Activated B cell treated with CpG ODN at 0.5 μM for 24 hours (primary cell): ENCODE measurements at regions of chr16 and their contacts with region 1.

Region 1: GRCh38 chr16:4475880-4476788 is at the start of gene HMOX2:
- DNase-seq: peak; percentile 98
- ATAC-seq: peak; percentile 91
- H3K4me3 Mint-ChIP-seq: peak within 1 kb of the TSS; percentile 85
- H3K27ac Mint-ChIP-seq: peak within 1 kb of the TSS; percentile 80
- H3K4me1 Mint-ChIP-seq: peaks cover 37% of the 10 kb centered on the region
- H3K27me3 Mint-ChIP-seq: no peaks in the 10 kb centered on the region
- CTCF ChIP-seq: no peak
- total RNA-seq, gene HMOX2: 30.8 and 32.1 TPM in 2 replicates

Region 2: DNA sequence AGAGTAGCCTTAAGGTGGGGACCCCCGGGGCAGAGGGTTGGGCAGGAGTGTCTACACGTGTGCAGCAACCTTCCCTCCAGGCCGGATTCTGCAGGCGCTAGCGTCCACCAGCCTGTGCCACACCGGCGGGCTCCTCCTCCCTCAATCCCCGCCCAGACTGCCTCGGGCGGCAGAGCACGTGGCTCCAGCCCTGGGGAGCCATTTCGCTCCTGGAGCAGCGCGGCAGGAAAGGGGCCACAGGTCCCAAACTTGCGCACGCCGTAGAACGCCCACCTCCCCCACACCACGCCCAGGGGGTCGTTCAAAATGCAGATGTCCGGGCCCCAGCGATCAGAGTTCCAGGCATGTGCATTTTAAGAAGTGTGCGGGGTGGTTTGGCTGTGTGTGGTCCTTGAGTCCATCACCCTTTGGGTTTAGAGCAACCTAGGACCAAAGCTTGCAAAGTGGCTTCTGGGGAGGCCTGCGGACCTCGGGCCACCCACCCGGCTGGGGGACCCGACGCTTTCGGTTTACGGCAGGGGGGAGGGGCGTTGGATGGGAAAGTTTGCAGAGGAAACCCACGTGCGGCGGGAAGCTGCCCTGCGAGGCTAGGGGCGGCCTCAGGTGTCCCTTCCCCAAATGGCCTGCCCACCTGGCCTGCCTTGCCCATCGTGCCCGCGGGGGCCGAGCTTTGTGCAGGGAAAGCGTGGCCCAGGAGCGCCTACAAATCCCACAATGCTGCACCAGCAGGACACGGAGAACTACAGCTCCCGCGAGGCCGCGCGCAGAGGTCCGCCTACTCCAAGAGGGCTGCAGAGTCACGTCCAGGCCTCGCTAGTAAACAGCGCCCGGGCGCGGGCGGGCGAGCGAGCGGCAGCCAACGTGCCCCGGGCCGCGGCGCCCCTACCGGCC is 204.7 kb before region 1 on chr16:
- CTCF ChIA-PET with region 1: no interaction called
- POLR2A ChIA-PET with region 1: interaction called, 3 read pairs
- intact Hi-C with region 1: loop called (anchors 5 kb)
- DNase-seq: peak; percentile 82
- ATAC-seq: peak; percentile 81
- H3K4me3 Mint-ChIP-seq: peak overlapping the region; percentile 86
- H3K27ac Mint-ChIP-seq: peak overlapping the region; percentile 88
- H3K4me1 Mint-ChIP-seq: peaks cover 11% of the 10 kb centered on the region
- H3K27me3 Mint-ChIP-seq: no peaks in the 10 kb centered on the region
- CTCF ChIP-seq: no peak

Region 3: DNA sequence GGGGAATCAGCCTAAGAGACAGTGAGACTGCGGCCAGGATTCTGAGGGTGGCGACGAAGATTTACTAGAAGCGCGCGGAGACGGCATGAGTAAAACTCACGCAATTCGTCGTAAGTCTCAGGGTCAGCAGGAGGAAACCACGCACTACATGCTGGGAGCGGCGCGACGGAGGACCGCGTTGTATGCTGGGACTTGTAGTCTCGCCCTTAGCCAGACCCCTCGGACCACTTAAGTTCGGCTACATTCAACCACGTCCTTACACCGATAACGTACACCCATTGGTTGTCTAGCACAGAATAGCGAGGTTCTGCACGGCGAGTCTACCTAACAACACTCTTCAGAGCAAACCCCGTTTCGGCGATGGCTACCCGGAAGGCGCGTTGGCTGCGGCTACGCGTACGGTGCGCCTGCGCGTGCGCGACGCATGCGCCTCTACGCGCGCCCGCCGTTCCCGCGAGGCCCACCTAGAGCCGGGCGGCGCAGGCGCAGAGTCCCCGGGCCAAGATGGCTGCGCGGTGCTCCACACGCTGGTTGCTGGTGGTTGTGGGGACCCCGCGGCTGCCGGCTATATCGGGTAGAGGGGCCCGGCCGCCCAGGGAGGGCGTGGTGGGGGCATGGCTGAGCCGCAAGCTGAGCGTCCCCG is 50.6 kb before region 1 on chr16 and contains the start of gene DNAJA3:
- CTCF ChIA-PET with region 1: no interaction called
- POLR2A ChIA-PET with region 1: interaction called, 5 read pairs
- intact Hi-C with region 1: loop called (anchors 1 kb)
- DNase-seq: peak; percentile 93
- ATAC-seq: peak; percentile 90
- H3K4me3 Mint-ChIP-seq: peak within 1 kb of the TSS; percentile 97
- H3K27ac Mint-ChIP-seq: peak within 1 kb of the TSS; percentile 100
- H3K4me1 Mint-ChIP-seq: peaks cover 31% of the 10 kb centered on the region
- H3K27me3 Mint-ChIP-seq: no peaks in the 10 kb centered on the region
- CTCF ChIP-seq: no peak
- total RNA-seq, gene DNAJA3: 55.3 and 62.6 TPM in 2 replicates

Region 4: DNA sequence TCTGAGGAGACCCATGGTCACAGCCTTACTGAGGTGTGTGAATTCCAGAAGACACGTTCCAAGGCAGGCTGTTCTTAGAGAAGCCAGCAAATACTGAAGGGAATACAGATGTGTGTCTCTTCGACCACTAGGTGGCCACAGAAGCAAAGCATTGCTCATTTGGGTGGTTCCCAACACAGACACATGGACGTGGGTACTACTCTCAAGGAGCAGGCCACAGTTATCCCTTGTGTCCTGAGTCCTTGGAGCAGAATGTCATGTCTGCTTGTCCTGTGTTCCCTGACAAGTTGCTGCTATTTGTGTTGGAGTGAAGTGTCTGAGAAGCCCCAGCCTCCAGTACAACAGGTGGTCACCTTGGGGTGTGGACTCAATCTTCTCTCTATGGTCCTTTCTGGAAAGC is 30.3 kb after region 1 on chr16:
- CTCF ChIA-PET with region 1: interaction called, 26 read pairs
- POLR2A ChIA-PET with region 1: interaction called, 23 read pairs
- intact Hi-C with region 1: loop called (anchors 1 kb)
- DNase-seq: peak; percentile 31
- ATAC-seq: peak; percentile 39
- H3K4me3 Mint-ChIP-seq: peak overlapping the region; percentile 29
- H3K27ac Mint-ChIP-seq: peak overlapping the region; percentile 93
- H3K4me1 Mint-ChIP-seq: peaks cover 40% of the 10 kb centered on the region
- H3K27me3 Mint-ChIP-seq: no peaks in the 10 kb centered on the region
- CTCF ChIP-seq: peak; percentile 46

Region 5: GRCh38 chr16:4544473-4544872 is 68.3 kb after region 1 on chr16:
- CTCF ChIA-PET with region 1: interaction called, 5 read pairs
- POLR2A ChIA-PET with region 1: interaction called, 13 read pairs
- intact Hi-C with region 1: loop called (anchors 1 kb)
- DNase-seq: no peak
- ATAC-seq: no peak
- H3K4me3 Mint-ChIP-seq: no peak overlapping the region
- H3K27ac Mint-ChIP-seq: no peak overlapping the region
- H3K4me1 Mint-ChIP-seq: peaks cover 4% of the 10 kb centered on the region
- H3K27me3 Mint-ChIP-seq: peaks cover 1% of the 10 kb centered on the region
- CTCF ChIP-seq: no peak

Region 6: DNA sequence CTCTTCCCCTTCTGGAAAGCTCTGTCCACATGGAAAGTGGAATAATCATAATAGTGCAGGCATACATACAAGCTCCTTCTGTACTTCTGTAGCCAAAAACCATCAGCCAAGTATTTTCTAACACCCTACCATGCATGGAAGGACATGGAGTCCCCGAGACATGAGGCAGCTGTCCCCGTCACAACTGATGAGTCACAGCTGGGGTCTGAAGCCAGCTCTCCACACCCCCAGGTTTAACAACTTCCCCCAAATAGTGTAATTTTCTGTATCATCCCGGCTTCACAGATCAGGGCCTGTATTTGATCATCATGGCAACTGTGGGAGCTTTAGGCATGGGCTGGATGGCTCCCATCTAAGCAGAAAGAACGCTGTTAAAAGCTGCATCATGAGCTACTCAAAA is 96.6 kb after region 1 on chr16:
- CTCF ChIA-PET with region 1: no interaction called
- POLR2A ChIA-PET with region 1: no interaction called
- intact Hi-C with region 1: no loop called
- DNase-seq: no peak
- ATAC-seq: no peak
- H3K4me3 Mint-ChIP-seq: no peak overlapping the region
- H3K27ac Mint-ChIP-seq: no peak overlapping the region
- H3K4me1 Mint-ChIP-seq: no peaks in the 10 kb centered on the region
- H3K27me3 Mint-ChIP-seq: no peaks in the 10 kb centered on the region
- CTCF ChIP-seq: no peak

Region 7: DNA sequence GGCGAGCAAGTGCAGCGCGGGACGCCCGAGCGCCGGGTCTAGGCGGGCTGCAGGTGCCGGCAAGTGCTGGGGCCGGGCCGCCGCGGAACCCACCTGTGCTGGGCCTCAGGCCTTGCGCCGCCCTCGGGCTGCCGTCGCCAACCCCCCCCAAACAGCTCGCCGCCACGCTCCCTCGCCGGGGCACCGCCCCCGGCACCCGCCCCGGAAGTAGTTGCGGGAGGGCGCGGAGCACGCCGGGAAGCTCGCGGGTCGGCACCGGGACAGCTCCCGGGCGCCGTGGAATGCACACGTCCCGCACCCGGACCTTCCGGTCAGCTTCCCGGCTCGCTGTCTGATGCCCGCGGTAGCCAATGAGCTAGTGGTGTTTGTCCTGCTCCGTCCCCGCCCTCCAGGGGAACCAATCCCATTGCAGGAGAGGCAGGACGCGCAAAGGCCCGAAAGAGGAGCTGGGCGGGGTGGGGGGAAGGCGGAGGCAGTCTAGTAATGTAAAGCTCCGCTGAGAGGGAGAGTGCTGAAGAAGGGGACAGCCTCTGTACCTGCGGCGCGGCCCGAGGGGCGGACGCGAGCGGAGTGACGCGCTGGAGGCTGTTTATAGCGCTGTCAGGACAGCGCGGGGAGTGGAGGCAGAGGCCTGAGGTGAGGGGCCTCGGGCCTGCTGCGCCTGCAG is 258.1 kb after region 1 on chr16 and contains the starts of genes ANKS3 and DNAAF8:
- CTCF ChIA-PET with region 1: interaction called, 3 read pairs
- POLR2A ChIA-PET with region 1: no interaction called
- intact Hi-C with region 1: loop called (anchors 1 kb)
- DNase-seq: peak; percentile 84
- ATAC-seq: peak; percentile 77
- H3K4me3 Mint-ChIP-seq: peak within 1 kb of the TSS; percentile 90
- H3K27ac Mint-ChIP-seq: peak within 1 kb of the TSS; percentile 87
- H3K4me1 Mint-ChIP-seq: peaks cover 18% of the 10 kb centered on the region
- H3K27me3 Mint-ChIP-seq: no peaks in the 10 kb centered on the region
- CTCF ChIP-seq: no peak
- total RNA-seq, gene ANKS3: 17.9 and 21.9 TPM in 2 replicates
- total RNA-seq, gene DNAAF8: 0.29 and 0.31 TPM in 2 replicates